Cardiac septum (tissue), 1 donor: ENCODE measurements at regions of chr11 and their contacts with region 1.

Region 1: DNA sequence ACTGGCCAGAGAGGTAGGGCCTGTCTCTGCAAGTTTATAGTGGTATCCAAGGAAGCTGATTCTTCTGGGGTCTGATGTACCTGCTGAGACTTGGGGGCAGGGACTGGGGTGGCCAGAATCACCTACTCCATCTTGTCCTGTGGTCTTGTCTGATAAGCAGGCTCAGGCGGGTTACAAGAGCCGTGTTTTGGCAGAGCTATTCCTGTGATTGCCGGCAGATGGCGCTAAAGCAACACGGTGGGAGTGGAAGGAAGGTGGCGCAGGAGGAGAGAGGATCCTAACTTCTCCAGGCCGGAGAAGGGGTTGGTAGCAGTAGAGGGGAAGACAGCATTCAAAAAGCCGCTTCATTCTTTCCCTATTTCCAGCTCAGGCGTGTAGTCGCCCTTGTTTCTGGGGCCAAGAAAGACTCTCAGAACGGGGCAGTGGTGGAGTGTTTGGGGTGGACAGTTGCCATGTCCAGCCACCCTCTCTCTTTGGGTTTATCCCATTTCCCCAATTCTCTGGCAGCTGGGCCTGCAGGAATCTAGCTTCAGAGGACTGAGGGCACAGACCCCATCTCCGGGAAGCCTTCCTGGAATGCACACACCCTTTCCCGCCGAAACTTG is 15.1 kb downstream of the CHRM1 start:
- DNase-seq: peak; percentile 88

Region 2: GRCh38 chr11:62694455-62695167 is 211.4 kb before region 1 on chr11:
- intact Hi-C with region 1: no loop called
- DNase-seq: peak; percentile 90

Region 3: GRCh38 chr11:62816557-62816956 is 89.5 kb before region 1 on chr11:
- intact Hi-C with region 1: no loop called
- DNase-seq: no peak

Region 4: DNA sequence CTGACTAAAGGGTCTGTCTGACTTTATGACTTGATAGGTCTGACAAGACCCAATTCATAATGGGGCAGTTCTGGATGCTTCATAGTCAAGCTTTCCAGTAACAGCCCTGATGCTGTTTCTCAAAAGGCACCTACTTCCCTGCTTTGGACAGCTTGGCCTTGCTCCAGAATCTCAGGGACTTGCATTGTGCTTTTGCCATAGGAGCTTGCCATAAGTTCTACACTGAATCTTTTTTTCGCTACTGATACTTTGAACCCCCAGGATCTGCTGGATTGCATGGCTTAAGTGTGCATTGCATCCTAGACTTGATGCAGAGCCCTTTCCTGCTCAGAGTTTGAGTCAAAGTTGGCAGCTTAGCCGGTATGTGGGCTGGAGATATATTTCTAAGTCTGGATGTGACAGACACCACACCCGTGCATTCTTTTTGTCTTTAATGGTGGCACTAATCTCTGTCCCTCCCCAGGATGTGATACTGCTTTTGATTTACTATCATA is 42.3 kb before region 1 on chr11:
- intact Hi-C with region 1: no loop called
- DNase-seq: no peak

Region 5: GRCh38 chr11:62974848-62975522 is 69.0 kb after region 1 on chr11:
- intact Hi-C with region 1: loop called (anchors 5 kb)
- DNase-seq: peak; percentile 78

Region 6: GRCh38 chr11:63023841-63024648 is 118.0 kb after region 1 on chr11:
- intact Hi-C with region 1: loop called (anchors 1 kb)
- DNase-seq: peak; percentile 89

Region 7: DNA sequence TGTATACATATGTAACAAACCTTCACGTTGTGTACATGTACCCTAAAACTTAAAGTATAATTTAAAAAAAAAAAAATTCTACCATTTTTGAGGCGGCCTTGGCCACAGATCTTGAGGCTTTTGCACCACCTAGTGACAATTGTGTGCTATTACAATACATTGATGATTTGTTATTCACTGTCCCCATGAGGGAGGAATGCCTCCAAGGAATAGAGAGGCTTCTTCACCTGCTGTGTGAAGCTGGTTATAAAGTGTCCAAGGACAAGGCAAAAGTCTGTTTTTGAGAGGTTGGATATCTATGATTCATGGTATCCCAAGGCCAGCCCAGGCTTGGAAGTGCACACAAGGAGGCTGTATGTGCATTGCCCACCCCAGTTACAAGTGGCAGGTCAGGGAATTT is 306.7 kb after region 1 on chr11:
- intact Hi-C with region 1: loop called (anchors 5 kb)
- DNase-seq: no peak